Activated CD4-positive, alpha-beta T cell treated with anti-CD3 and anti-CD28 coated beads, Interleukin-2, amount 10 ng/mL, durations not matched to agents 7 days and 5 days (primary cell): ENCODE measurements at regions of chr7 and their contacts with region 1.

Region 1: DNA sequence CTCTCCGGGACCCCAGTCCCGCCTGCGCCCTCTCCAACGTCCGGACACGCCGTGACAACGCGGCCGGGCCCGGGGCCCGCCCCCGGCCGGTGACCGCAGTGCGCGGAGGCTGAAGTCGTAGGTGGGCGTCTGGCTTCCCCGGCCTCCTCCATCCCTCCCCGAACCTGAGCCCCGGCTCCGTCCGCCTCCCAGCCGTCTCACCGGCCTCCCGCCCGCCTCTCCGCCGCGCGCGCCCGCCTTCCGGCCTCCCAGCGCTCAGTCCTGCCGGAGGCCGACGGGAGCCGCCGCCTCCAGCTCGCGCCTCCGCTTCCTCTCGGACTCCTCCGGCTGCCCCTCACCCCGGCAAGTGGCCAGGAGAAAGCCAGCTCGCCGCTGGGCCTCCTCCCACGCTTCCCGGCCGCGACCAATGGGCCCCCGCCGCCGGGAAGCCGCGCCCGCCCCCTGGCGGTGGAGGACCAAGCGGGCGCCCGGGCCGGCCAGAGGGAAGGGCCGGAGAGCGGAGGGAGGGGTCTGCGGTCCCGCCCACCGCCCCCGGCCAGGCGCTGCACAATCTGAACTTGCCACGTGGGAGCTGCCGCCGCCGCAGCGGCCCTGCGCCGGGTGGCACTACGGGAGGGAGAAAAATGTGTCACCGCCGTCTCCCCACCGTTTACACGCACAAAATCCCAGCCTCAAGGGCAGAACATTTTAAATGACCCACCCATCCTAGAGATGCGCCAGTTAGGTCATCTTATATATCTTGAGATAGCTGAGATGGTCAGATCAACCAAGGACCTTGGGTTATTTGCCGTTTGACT is at the start of gene FAM3C:
- DNase-seq: peak; percentile 68
- H3K4me3 Mint-ChIP-seq: peak within 1 kb of the TSS; percentile 81
- H3K27ac Mint-ChIP-seq: peak within 1 kb of the TSS; percentile 86
- H3K4me1 Mint-ChIP-seq: peaks cover 25% of the 10 kb centered on the region
- H3K27me3 Mint-ChIP-seq: no peaks in the 10 kb centered on the region
- total RNA-seq, gene FAM3C: 12.2 to 15.6 TPM

Region 2: GRCh38 chr7:121204537-121204936 is 191.6 kb before region 1 on chr7:
- CTCF ChIA-PET with region 1: no interaction called
- POLR2A ChIA-PET with region 1: no interaction called
- DNase-seq: no peak
- H3K4me3 Mint-ChIP-seq: no peak overlapping the region
- H3K27ac Mint-ChIP-seq: no peak overlapping the region
- H3K4me1 Mint-ChIP-seq: no peaks in the 10 kb centered on the region
- H3K27me3 Mint-ChIP-seq: no peaks in the 10 kb centered on the region

Region 3: GRCh38 chr7:121214657-121215056 is 181.5 kb before region 1 on chr7:
- CTCF ChIA-PET with region 1: no interaction called
- POLR2A ChIA-PET with region 1: no interaction called
- DNase-seq: no peak
- H3K4me3 Mint-ChIP-seq: no peak overlapping the region
- H3K27ac Mint-ChIP-seq: no peak overlapping the region
- H3K4me1 Mint-ChIP-seq: no peaks in the 10 kb centered on the region
- H3K27me3 Mint-ChIP-seq: no peaks in the 10 kb centered on the region

Region 4: DNA sequence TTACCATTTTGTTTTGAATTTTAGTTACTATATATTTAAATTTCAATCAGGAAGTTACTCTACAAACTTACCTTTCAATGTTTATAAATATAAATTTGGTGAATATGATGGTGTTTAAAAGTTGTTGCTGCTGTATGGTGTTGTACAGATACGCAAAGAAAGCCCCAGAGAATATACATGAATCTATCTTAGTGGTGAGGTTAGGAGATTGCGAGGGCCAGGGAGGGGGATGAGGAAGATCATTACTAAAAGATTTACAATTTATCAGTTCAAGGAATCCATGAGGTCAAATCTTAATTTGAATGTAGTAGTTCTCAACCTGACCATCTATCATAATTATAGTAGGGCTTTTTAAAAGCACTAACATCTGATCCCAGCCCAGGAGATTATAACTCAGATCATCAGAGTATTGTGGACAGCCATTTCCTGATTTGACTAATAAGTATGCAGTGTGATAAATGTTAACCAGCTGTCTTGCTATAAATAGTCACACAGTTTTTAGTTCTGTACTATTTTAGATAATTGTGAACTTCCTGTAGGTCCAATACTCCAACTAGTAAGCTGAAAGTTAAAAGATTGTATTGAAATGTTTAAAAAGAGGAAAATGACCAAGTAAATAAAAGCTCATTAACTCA is 23.7 kb before region 1 on chr7:
- CTCF ChIA-PET with region 1: interaction called, 30 read pairs
- POLR2A ChIA-PET with region 1: no interaction called
- DNase-seq: no peak
- H3K4me3 Mint-ChIP-seq: no peak overlapping the region
- H3K27ac Mint-ChIP-seq: peak overlapping the region; percentile 28
- H3K4me1 Mint-ChIP-seq: peaks cover 36% of the 10 kb centered on the region
- H3K27me3 Mint-ChIP-seq: no peaks in the 10 kb centered on the region

Region 5: GRCh38 chr7:121385800-121386179 is 10.4 kb before region 1 on chr7:
- CTCF ChIA-PET with region 1: interaction called, 22 read pairs
- POLR2A ChIA-PET with region 1: no interaction called
- DNase-seq: no peak
- H3K4me3 Mint-ChIP-seq: no peak overlapping the region
- H3K27ac Mint-ChIP-seq: no peak overlapping the region
- H3K4me1 Mint-ChIP-seq: peaks cover 48% of the 10 kb centered on the region
- H3K27me3 Mint-ChIP-seq: no peaks in the 10 kb centered on the region

Region 6: GRCh38 chr7:121420979-121421378 is 24.8 kb after region 1 on chr7:
- CTCF ChIA-PET with region 1: interaction called, 13 read pairs
- POLR2A ChIA-PET with region 1: no interaction called
- DNase-seq: no peak
- H3K4me3 Mint-ChIP-seq: no peak overlapping the region
- H3K27ac Mint-ChIP-seq: no peak overlapping the region
- H3K4me1 Mint-ChIP-seq: no peaks in the 10 kb centered on the region
- H3K27me3 Mint-ChIP-seq: peaks cover 14% of the 10 kb centered on the region

Region 7: GRCh38 chr7:121547544-121548092 is 151.5 kb after region 1 on chr7:
- CTCF ChIA-PET with region 1: interaction called, 15 read pairs
- POLR2A ChIA-PET with region 1: no interaction called
- DNase-seq: peak; percentile 26
- H3K4me3 Mint-ChIP-seq: no peak overlapping the region
- H3K27ac Mint-ChIP-seq: no peak overlapping the region
- H3K4me1 Mint-ChIP-seq: peaks cover 27% of the 10 kb centered on the region
- H3K27me3 Mint-ChIP-seq: peaks cover 7% of the 10 kb centered on the region